Activated CD8-positive, alpha-beta T cell treated with anti-CD3 and anti-CD28 coated beads for 36 hours (primary cell): ENCODE measurements at regions of chr12 and their contacts with region 1.

Region 1: DNA sequence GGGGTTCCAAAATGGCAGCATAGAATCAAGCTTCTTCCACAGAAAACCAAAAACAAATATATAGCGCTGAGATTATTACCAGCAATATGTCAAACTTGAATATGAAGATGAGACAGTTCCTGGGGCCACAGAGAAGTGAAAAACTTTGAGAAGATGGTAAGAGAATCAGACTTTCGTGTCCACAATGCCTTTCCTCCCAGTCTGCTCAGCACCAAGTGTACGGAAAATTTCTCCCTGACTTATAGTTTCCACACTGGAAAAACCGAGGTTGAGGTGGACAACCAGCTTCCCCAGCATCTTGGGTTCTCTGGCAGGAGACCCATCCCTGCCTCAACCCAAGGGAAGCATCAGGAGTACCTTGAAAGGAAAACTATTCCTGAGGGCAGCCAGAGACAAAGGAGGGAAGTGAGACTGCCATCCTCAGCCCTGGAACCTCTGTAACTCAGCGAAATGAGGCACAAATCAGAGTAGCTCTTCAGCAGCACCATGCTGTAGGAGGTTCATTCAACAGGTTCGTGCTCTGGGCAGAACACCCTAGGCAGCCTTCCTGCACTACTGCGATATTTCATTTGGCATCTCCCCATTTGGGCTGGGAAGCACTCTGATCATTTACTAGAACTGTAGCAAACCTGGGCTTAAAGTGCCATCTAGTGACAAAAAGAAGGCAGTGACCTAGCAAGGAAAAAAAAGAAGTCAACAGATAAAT is 52.4 kb upstream of the CAPRIN2 start:
- DNase-seq: peak; percentile 21
- ATAC-seq: peak; percentile 73
- H3K4me3 Mint-ChIP-seq: no peak overlapping the region
- H3K27ac Mint-ChIP-seq: no peak overlapping the region
- H3K4me1 Mint-ChIP-seq: no peaks in the 10 kb centered on the region
- H3K27me3 Mint-ChIP-seq: peaks cover 11% of the 10 kb centered on the region
- CTCF ChIP-seq: peak; percentile 82

Region 2: GRCh38 chr12:29519585-29520182 is 1287.5 kb before region 1 on chr12:
- CTCF ChIA-PET with region 1: interaction called, 24 read pairs
- POLR2A ChIA-PET with region 1: no interaction called
- intact Hi-C with region 1: no loop called
- DNase-seq: peak; percentile 41
- ATAC-seq: no peak
- H3K4me3 Mint-ChIP-seq: no peak overlapping the region
- H3K27ac Mint-ChIP-seq: no peak overlapping the region
- H3K4me1 Mint-ChIP-seq: no peaks in the 10 kb centered on the region
- H3K27me3 Mint-ChIP-seq: peaks cover 6% of the 10 kb centered on the region
- CTCF ChIP-seq: peak; percentile 71

Region 3: GRCh38 chr12:29552324-29552927 is 1254.7 kb before region 1 on chr12:
- CTCF ChIA-PET with region 1: interaction called, 6 read pairs
- POLR2A ChIA-PET with region 1: no interaction called
- intact Hi-C with region 1: loop called (anchors 10 kb)
- DNase-seq: peak; percentile 64
- ATAC-seq: peak; percentile 67
- H3K4me3 Mint-ChIP-seq: no peak overlapping the region
- H3K27ac Mint-ChIP-seq: no peak overlapping the region
- H3K4me1 Mint-ChIP-seq: no peaks in the 10 kb centered on the region
- H3K27me3 Mint-ChIP-seq: peaks cover 3% of the 10 kb centered on the region
- CTCF ChIP-seq: peak; percentile 89

Region 4: DNA sequence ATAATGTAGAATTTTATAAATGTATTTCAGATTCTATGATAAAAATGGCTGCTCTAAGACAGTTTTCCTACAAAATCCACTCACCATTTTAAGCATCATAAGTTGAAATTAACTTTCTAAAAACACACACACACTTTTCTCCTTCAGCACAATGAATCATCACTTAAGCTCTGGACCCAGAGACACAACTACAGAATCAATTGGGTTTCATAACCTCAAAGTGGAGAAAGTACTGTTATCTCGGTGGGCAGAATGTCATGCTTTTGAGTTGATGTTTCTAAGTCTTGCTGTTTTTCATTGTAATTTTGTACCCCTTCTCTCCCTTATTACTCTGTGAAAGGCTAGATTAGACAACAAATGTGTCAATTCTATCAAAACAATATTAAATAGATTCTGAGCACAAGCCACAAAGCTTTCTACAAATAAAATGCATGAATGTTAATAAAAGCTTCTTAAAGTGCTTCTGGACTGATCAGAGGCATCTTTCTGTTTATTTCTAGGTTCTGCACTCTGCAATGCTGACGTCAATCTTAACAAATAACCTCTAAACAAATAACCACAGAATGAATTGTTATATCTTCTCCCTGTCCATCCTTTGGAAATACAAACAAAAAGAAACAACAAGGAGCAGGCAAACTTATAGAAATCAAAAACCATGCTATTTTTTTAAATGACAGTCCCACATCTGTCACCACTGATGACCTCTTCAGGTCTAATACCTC is 119.7 kb before region 1 on chr12:
- CTCF ChIA-PET with region 1: no interaction called
- POLR2A ChIA-PET with region 1: no interaction called
- intact Hi-C with region 1: no loop called
- DNase-seq: no peak
- ATAC-seq: no peak
- H3K4me3 Mint-ChIP-seq: no peak overlapping the region
- H3K27ac Mint-ChIP-seq: no peak overlapping the region
- H3K4me1 Mint-ChIP-seq: peaks cover 25% of the 10 kb centered on the region
- H3K27me3 Mint-ChIP-seq: no peaks in the 10 kb centered on the region
- CTCF ChIP-seq: no peak